ENCODE measurements at regions of chr16 and their contacts with region 1.

Region 1: DNA sequence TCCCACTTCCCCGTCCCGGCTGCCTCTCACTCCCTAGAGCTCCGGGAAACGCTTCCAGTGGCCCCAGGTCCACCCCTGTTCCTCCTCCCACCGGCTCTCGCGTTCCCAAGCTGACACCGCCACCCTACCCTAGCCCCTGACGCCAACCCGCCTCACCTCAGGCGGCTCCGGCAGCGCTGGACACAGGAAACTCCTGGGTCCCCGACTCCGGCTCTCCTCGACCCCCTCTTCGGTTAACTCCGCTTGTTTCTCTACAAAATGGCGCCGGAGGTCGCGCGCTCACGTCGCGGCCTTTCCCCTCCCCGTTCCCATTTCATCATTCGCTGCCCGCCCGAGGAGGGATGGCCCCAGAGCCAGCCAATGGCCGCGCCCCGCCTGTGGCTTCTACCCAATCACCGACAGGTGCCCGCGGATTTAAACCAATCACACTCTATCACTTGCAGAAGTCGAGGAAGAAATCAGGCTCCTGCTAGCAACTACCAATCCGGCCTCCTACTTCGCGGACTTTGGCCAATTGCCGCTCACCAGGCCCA is at the start of gene CNOT1:
- DNase-seq: peak; percentile 99
- H3K4me3 ChIP-seq: peak within 1 kb of the TSS; percentile 64 to 98 (median 92)
- H3K27ac ChIP-seq: peak within 1 kb of the TSS; percentile 98 to 99
- H3K4me1 ChIP-seq: no peaks in the 10 kb centered on the region
- H3K27me3 ChIP-seq: no peaks in the 10 kb centered on the region
- CTCF ChIP-seq: peak in 2 of 3 donors; percentile 21 to 34
- POLR2A ChIP-seq: peak; percentile 47
- total RNA-seq, gene CNOT1: 106 to 140 (median 117) TPM

Region 2: DNA sequence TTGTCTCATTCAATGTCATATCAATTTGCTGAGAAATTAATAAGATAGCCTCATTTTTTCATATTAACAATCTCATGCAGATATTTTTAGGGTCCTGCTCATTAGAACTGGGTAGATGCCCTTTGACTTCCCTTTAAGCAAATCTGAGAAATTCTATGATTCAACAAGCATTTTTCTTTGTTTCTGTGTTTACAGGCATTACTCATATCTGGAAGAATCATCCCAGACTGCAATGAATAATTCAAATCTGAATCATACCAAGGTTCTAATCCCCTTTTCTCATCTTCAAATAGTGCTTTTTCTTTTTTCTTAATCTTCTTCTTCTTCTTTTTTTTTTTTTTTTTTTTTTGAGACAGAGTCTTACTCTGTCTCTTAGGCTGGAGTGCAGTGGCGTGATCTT is 758.2 kb before region 1 on chr16:
- intact Hi-C with region 1: loop called (anchors 10 kb)
- DNase-seq: no peak
- H3K4me3 ChIP-seq: no peak overlapping the region
- H3K27ac ChIP-seq: no peak overlapping the region
- H3K4me1 ChIP-seq: no peaks in the 10 kb centered on the region
- H3K27me3 ChIP-seq: no peaks in the 10 kb centered on the region
- CTCF ChIP-seq: no peak
- POLR2A ChIP-seq: no peak

Region 3: GRCh38 chr16:58614212-58614611 is 15.4 kb before region 1 on chr16:
- intact Hi-C with region 1: no loop called
- DNase-seq: no peak
- H3K4me3 ChIP-seq: no peak overlapping the region
- H3K27ac ChIP-seq: no peak overlapping the region
- H3K4me1 ChIP-seq: no peaks in the 10 kb centered on the region
- H3K27me3 ChIP-seq: no peaks in the 10 kb centered on the region
- CTCF ChIP-seq: no peak
- POLR2A ChIP-seq: no peak

Measured in breast epithelium (tissue), 4 donors.